RWPE1 (cell line): ENCODE measurements at regions of chr2 and their contacts with region 1.

Region 1: DNA sequence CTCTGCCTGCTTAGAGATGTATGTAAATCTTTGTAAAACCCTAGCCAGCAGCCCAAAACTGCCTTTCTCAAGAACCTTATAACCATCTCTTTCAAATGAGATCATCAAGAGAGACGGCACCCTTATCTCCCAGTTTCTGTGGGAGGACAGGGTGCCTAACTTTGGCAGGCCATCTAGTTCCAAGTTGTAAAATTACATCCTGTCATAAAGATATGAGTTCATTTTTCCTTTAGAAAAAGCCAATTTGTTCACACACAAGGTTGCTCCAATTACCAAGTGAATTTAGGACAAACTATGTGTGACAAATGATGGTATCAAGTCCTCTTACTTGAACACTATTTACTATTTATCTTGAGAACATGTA is 65.3 kb downstream of the MEMO1 start:
- DNase-seq: no peak
- H3K27ac ChIP-seq: no peak overlapping the region
- CTCF ChIP-seq: no peak

Region 2: GRCh38 chr2:31962757-31963361 is 17.3 kb after region 1 on chr2:
- CTCF ChIA-PET with region 1: no interaction called
- POLR2A ChIA-PET with region 1: no interaction called
- DNase-seq: no peak
- H3K27ac ChIP-seq: no peak overlapping the region
- CTCF ChIP-seq: no peak

Region 3: GRCh38 chr2:32010670-32011484 is 65.3 kb after region 1 on chr2 and contains the start of gene MEMO1:
- CTCF ChIA-PET with region 1: no interaction called
- POLR2A ChIA-PET with region 1: no interaction called
- DNase-seq: peak; percentile 87
- H3K27ac ChIP-seq: peak within 1 kb of the TSS; percentile 98
- CTCF ChIP-seq: no peak

Region 4: GRCh38 chr2:32446362-32446761 is 500.8 kb after region 1 on chr2:
- CTCF ChIA-PET with region 1: interaction called, 10 read pairs
- POLR2A ChIA-PET with region 1: no interaction called
- DNase-seq: no peak
- H3K27ac ChIP-seq: no peak overlapping the region
- CTCF ChIP-seq: no peak